Naive thymus-derived CD4-positive, alpha-beta T cell (primary cell): ENCODE measurements at regions of chr2 and their contacts with region 1.

Region 1: DNA sequence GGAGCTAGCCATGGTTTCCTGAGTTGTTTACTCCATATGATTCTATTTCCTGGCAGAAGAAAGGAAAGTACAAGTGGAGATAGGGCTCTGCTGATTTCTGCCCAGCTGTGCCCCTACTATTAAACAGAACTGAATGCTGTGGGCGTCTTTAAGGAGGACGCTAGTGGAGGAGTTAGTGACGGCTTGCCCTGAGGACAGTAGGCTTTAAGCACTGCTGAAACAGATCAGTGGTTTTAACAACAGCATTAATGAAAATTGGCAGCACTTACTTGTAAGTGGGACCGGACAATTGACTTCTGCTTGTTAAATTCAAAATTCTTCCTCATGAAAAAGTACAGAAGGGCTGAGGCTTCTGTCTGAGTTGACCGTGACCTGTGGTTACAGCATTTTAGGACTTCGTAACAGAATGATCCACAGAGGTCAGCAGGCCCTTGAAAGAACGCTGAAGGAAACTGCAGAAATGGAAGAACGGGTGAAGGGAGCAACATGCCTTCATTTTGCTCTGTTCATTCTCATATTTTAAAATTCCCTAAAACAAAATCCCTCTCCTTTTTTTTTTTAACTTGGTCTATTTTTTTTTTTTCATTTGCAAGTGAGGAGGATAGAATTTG is 80.6 kb upstream of the CCDC195 start:
- DNase-seq: no peak
- ATAC-seq: no peak
- H3K4me3 ChIP-seq: no peak overlapping the region
- H3K4me3 Mint-ChIP-seq: no peak overlapping the region
- H3K27ac ChIP-seq: no peak overlapping the region
- H3K27ac Mint-ChIP-seq: peak overlapping the region in 6 of 9 donors; percentile 33 to 64 (median 58)
- H3K4me1 ChIP-seq: no peaks in the 10 kb centered on the region
- H3K4me1 Mint-ChIP-seq: peaks cover 0 to 4% (median 0%) of the 10 kb centered on the region in 7 donors
- H3K27me3 ChIP-seq: no peaks in the 10 kb centered on the region
- H3K27me3 Mint-ChIP-seq: no peaks in the 10 kb centered on the region

Region 2: GRCh38 chr2:224843141-224843540 is 46.3 kb after region 1 on chr2:
- CTCF ChIA-PET with region 1: no interaction called
- POLR2A ChIA-PET with region 1: no interaction called
- intact Hi-C with region 1: loop called (anchors 5 kb)
- DNase-seq: no peak
- ATAC-seq: no peak
- H3K4me3 ChIP-seq: no peak overlapping the region
- H3K4me3 Mint-ChIP-seq: no peak overlapping the region
- H3K27ac ChIP-seq: no peak overlapping the region
- H3K27ac Mint-ChIP-seq: peak overlapping the region in 6 of 9 donors; percentile 23 to 84 (median 36)
- H3K4me1 ChIP-seq: no peaks in the 10 kb centered on the region
- H3K4me1 Mint-ChIP-seq: peaks cover 0 to 14% (median 0%) of the 10 kb centered on the region in 7 donors
- H3K27me3 ChIP-seq: no peaks in the 10 kb centered on the region
- H3K27me3 Mint-ChIP-seq: no peaks in the 10 kb centered on the region